MCF 10A (cell line): ENCODE measurements at regions of chr19 and their contacts with region 1.

Region 1: DNA sequence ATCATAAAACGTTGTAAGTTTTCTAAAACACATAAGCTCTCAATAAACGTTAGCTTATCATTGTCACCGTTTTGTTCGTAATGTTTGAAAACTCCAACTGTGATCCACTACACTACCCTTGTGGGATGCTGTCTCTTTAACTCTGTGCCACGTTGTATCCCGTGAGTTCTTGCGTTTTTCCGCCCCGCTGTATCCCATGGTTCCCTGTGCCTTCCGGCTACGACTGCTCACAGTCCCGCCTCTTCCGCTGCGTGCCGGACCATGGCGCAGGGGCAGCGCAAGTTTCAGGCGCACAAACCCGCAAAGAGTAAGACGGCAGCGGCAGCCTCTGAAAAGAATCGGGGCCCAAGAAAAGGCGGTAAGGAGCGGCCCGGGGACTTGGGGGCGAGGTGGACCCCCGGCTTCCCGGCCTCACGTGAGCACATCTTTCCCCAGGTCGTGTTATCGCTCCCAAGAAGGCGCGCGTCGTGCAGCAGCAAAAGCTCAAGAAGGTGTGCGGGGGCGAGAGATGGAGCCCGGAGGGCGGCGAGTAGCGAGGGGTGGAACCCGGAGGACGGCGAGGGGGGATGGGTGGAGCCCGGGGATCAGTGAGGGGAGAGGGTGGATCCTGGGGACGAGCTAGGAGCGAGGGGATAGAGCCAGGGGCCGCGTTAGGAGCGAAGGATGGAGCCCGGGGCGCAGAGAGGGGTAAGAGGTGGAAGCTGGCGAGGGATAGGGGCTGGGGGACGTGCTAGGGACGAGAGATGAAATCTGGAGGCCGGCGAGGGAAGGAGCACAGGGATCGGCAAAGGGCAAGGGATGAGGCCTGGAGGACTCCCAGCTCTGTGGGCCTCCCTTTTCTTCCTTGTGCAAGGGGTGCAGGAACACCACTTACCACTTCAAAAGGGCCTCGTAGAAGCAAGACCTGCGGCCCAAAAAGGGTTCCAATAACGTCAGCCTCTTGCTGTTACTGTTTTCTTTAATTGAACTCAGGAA is at the start of gene C19orf53:
- DNase-seq: peak; percentile 94
- H3K4me3 Mint-ChIP-seq: peak within 1 kb of the TSS; percentile 98
- H3K27ac Mint-ChIP-seq: peak within 1 kb of the TSS; percentile 94
- H3K4me1 Mint-ChIP-seq: peaks cover 14% of the 10 kb centered on the region
- H3K27me3 Mint-ChIP-seq: no peaks in the 10 kb centered on the region
- CTCF ChIP-seq: no peak
- total RNA-seq, gene C19orf53: 89.0 and 101 TPM in 2 replicates

Region 2: GRCh38 chr19:13597640-13598039 is 176.9 kb before region 1 on chr19:
- CTCF ChIA-PET with region 1: interaction called, 12 read pairs
- POLR2A ChIA-PET with region 1: no interaction called
- intact Hi-C with region 1: loop called (anchors 5 kb)
- DNase-seq: peak; percentile 75
- H3K4me3 Mint-ChIP-seq: no peak overlapping the region
- H3K27ac Mint-ChIP-seq: peak overlapping the region; percentile 44
- H3K4me1 Mint-ChIP-seq: no peaks in the 10 kb centered on the region
- H3K27me3 Mint-ChIP-seq: peaks cover 50% of the 10 kb centered on the region
- CTCF ChIP-seq: peak; percentile 78

Region 3: DNA sequence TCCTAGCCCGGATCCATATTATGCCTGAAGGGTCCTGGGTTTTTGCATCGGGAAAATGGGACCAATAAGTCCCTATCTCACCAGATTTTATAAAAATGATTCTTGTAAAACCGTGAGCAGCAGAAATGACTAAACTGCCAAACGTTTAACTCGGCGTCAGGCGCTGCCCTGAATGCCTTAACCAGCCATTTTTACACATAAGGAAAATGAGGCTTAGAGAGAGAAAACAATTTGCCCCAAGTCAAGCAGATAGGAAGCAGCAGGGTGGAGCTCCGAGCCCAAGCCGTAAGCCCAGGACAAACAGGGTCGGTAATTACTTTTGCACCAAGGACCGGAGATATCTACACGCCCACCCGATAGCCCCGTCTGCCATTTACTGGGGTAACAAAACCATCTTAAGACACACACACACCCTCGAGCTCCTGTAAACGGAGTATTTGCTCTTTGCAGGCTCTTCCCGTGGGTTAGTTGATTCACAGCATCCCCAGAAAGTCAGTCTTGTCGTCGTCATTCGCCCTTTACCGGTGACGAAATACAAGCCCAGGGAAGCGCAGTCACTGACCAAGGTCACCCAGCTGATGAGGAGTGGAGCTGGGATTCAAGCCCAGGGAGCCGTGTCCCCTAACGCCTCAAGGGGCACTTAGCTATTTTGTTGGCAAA is 26.2 kb before region 1 on chr19:
- CTCF ChIA-PET with region 1: no interaction called
- POLR2A ChIA-PET with region 1: interaction called, 48 read pairs
- intact Hi-C with region 1: no loop called
- DNase-seq: peak; percentile 27
- H3K4me3 Mint-ChIP-seq: peak overlapping the region; percentile 89
- H3K27ac Mint-ChIP-seq: peak overlapping the region; percentile 90
- H3K4me1 Mint-ChIP-seq: peaks cover 12% of the 10 kb centered on the region
- H3K27me3 Mint-ChIP-seq: no peaks in the 10 kb centered on the region
- CTCF ChIP-seq: no peak

Region 4: GRCh38 chr19:13784731-13785452 is 10.4 kb after region 1 on chr19:
- CTCF ChIA-PET with region 1: interaction called, 4 read pairs
- POLR2A ChIA-PET with region 1: interaction called, 17 read pairs
- intact Hi-C with region 1: no loop called
- DNase-seq: peak; percentile 78
- H3K4me3 Mint-ChIP-seq: no peak overlapping the region
- H3K27ac Mint-ChIP-seq: no peak overlapping the region
- H3K4me1 Mint-ChIP-seq: peaks cover 14% of the 10 kb centered on the region
- H3K27me3 Mint-ChIP-seq: no peaks in the 10 kb centered on the region
- CTCF ChIP-seq: peak; percentile 77

Region 5: DNA sequence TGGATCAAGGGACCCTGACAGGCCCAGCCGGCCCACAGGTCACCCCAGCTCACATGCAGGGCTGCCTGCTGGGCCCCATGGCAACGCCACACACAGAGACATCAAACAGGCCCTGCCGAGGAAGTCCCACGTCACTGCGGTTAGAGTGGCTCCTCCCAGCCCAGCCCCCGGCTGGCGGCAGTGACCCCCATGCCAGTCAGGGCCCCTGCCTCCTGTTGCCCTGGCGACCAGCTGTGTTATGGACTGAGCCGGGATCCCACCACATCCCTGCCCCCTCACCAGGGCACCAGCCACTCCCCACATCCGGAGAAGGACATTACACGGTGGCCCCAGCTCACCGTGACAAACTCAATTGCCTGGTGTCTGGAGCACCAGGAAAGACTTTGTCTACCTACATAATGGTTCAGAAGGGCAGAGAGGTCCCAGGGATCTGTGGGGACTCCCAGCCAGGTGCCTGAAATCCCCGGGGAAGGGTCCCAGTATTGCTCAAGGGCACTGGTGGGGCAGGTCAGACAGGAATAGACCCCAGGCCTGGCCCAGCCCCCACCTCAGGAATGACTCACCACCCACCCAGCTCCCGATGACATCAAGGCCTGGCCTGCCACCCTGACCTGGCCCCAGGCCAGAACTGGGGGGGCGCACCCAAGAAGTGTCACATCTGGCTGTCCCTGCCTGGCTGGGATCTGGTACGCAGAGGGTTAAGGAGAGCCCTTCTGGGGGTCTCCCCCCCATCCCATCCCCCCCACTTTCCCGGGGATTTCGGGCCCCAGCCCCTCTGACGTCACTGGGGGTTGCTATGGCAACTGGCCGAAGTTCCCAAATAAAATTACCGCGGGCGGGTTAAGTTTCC is 72.3 kb after region 1 on chr19:
- CTCF ChIA-PET with region 1: interaction called, 4 read pairs
- POLR2A ChIA-PET with region 1: interaction called, 22 read pairs
- intact Hi-C with region 1: no loop called
- DNase-seq: peak; percentile 93
- H3K4me3 Mint-ChIP-seq: peak overlapping the region; percentile 58
- H3K27ac Mint-ChIP-seq: peak overlapping the region; percentile 100
- H3K4me1 Mint-ChIP-seq: peaks cover 30% of the 10 kb centered on the region
- H3K27me3 Mint-ChIP-seq: no peaks in the 10 kb centered on the region
- CTCF ChIP-seq: no peak

Region 6: GRCh38 chr19:13932911-13933393 is 158.4 kb after region 1 on chr19:
- CTCF ChIA-PET with region 1: no interaction called
- POLR2A ChIA-PET with region 1: no interaction called
- intact Hi-C with region 1: no loop called
- DNase-seq: no peak
- H3K4me3 Mint-ChIP-seq: no peak overlapping the region
- H3K27ac Mint-ChIP-seq: no peak overlapping the region
- H3K4me1 Mint-ChIP-seq: peaks cover 6% of the 10 kb centered on the region
- H3K27me3 Mint-ChIP-seq: peaks cover 11% of the 10 kb centered on the region
- CTCF ChIP-seq: no peak

Region 7: DNA sequence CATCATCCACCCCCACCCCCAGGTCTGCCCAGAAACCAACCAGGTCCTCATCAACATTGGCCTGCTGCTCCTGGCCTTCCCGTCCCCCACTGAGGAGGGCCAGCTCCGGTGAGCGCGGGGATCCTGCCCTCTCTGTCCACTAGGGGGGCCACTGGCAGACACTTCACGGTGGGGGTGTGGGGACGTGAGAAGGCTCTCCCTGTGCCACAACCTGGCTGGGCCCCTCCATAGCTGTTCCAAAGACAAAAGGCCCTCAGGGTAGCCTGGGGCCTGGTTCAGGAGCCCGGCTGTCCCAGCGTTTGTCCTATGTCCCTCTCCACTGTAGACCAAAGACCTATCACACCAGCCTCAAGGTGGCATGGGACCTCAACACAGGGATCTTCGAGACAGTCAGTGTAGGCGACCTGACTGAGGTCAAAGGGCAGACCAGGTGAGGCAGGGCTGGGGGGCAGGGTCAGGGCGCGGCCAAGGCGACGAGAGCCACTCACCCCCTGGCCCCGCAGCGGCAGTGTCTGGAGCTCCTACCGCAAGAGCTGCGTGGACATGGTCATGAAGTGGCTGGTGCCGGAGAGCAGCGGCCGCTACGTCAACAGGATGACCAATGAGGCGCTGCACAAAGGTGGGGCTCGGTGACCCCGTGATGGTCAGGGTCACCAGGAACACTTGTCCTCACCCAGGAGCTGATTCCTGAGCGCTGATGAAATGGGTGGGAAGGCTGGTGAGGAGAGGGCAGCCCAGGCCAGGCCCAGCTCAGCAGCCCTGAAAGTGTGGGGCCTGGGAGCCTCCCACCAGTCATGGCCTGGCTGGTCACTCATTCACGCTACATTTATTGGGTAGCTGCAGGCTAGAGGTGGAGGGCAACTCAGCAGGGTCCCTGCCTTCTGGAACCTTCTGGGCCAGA is 185.7 kb after region 1 on chr19:
- CTCF ChIA-PET with region 1: no interaction called
- POLR2A ChIA-PET with region 1: no interaction called
- intact Hi-C with region 1: no loop called
- DNase-seq: no peak
- H3K4me3 Mint-ChIP-seq: no peak overlapping the region
- H3K27ac Mint-ChIP-seq: no peak overlapping the region
- H3K4me1 Mint-ChIP-seq: no peaks in the 10 kb centered on the region
- H3K27me3 Mint-ChIP-seq: no peaks in the 10 kb centered on the region
- CTCF ChIP-seq: peak; percentile 11